CD4-positive, alpha-beta memory T cell (primary cell): ENCODE measurements at regions of chr15 and their contacts with region 1.

Region 1: GRCh38 chr15:33392453-33392852 is 81.7 kb downstream of the RYR3 start:
- DNase-seq: no peak
- H3K4me3 ChIP-seq: no peak overlapping the region
- H3K4me3 Mint-ChIP-seq: no peak overlapping the region
- H3K27ac ChIP-seq: no peak overlapping the region
- H3K27ac Mint-ChIP-seq: no peak overlapping the region
- H3K4me1 ChIP-seq: no peaks in the 10 kb centered on the region
- H3K4me1 Mint-ChIP-seq: no peaks in the 10 kb centered on the region
- H3K27me3 ChIP-seq: no peaks in the 10 kb centered on the region
- H3K27me3 Mint-ChIP-seq: peaks cover 0 to 5% of the 10 kb centered on the region in 2 donors

Region 2: DNA sequence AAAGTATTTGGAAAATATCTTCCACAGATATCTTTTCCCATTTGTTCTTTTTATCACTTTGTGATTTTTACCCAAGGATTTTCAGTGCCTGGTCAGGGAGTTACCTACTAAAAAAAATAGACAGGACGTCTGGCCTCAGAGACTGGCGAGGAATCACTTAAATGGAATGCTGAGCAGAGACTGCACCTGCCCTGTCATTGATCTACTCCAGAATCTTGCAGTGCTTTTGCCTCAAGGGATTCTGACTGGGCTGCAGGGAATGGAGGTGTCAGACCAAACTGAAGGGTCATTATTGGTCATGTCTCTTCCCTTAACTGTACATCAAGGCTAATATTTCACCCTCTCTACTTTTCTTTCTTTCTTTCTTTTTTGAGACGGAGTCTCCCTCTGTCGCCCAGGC is 93.8 kb before region 1 on chr15:
- CTCF ChIA-PET with region 1: no interaction called
- POLR2A ChIA-PET with region 1: no interaction called
- intact Hi-C with region 1: no loop called
- DNase-seq: no peak
- H3K4me3 ChIP-seq: no peak overlapping the region
- H3K4me3 Mint-ChIP-seq: no peak overlapping the region
- H3K27ac ChIP-seq: no peak overlapping the region
- H3K27ac Mint-ChIP-seq: no peak overlapping the region
- H3K4me1 ChIP-seq: no peaks in the 10 kb centered on the region
- H3K4me1 Mint-ChIP-seq: no peaks in the 10 kb centered on the region
- H3K27me3 ChIP-seq: no peaks in the 10 kb centered on the region
- H3K27me3 Mint-ChIP-seq: peaks cover 0 to 1% of the 10 kb centered on the region in 2 donors

Region 3: DNA sequence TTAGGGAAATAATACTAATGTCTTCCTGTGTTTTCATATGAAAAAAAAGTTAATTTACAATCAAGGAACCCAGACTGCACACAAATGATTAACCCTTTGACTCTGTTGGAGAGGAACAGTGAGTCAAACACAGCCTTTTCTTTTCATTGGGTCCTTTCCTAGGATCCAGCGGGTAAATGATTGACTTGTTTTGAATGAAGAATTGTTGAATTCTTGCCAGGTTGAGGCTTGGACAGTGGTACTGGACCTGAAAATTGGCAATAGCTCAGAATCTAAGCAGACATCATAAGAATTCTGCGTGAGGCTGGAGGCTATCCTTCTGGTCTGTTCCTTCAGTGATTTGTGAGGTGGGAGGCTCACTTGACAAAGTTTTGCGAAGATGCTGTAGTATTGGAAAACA is 61.3 kb after region 1 on chr15:
- CTCF ChIA-PET with region 1: no interaction called
- POLR2A ChIA-PET with region 1: no interaction called
- intact Hi-C with region 1: loop called (anchors 10 kb)
- DNase-seq: no peak
- H3K4me3 ChIP-seq: no peak overlapping the region
- H3K4me3 Mint-ChIP-seq: no peak overlapping the region
- H3K27ac ChIP-seq: no peak overlapping the region
- H3K27ac Mint-ChIP-seq: no peak overlapping the region
- H3K4me1 ChIP-seq: no peaks in the 10 kb centered on the region
- H3K4me1 Mint-ChIP-seq: no peaks in the 10 kb centered on the region
- H3K27me3 ChIP-seq: no peaks in the 10 kb centered on the region
- H3K27me3 Mint-ChIP-seq: peaks cover 0 to 2% of the 10 kb centered on the region in 2 donors